Dendritic cell treated with granulocyte-macrophage colony-stimulating factor and Interleukin-4, amounts not matched to agents 40 ng/mL and 50 ng/mL, for 4 days (primary cell): ENCODE measurements at regions of chr3 and their contacts with region 1.

Region 1: DNA sequence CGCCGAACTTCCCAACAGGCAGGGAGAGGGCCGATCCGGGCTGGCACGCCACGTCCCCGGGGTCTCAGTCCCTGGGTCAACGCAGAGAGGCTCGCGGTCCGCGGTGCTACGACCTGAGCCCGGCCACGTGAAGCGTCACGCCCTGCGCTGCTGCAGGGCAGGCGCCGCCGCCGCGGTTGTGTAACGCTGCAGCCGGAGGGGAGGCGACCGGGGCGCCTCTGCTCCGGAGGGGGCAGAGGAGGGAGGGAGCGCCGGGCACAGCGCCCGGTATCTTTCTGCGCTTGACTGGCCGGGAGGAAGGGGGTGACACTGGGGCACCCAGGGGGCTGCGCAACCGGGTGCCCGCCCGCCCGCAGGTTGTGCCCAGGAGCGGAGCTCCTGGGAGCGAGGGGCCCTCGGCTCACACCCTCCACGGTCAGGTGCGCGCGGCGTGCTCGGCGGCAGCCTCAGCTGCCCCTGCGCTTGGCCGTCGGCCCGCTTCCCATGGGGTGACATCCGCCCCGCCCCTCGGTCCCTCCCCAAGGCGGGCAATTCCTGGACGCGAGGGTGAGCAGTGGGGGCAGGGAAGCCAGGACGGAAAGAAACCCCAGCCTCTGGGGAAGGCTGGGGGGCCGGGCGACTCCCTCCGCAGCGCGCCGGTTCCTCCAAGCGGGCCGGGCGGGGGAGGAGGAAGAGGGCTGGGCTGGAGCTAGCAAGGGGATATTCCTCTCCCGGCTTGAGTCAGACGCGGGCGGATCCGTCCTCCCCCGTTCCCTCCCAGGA is 852 bp upstream of the BHLHE40 start:
- H3K4me3 Mint-ChIP-seq: peak overlapping the region; percentile 98
- H3K27ac Mint-ChIP-seq: peak overlapping the region; percentile 99
- H3K4me1 Mint-ChIP-seq: peaks cover 40% of the 10 kb centered on the region
- H3K27me3 Mint-ChIP-seq: no peaks in the 10 kb centered on the region

Region 2: DNA sequence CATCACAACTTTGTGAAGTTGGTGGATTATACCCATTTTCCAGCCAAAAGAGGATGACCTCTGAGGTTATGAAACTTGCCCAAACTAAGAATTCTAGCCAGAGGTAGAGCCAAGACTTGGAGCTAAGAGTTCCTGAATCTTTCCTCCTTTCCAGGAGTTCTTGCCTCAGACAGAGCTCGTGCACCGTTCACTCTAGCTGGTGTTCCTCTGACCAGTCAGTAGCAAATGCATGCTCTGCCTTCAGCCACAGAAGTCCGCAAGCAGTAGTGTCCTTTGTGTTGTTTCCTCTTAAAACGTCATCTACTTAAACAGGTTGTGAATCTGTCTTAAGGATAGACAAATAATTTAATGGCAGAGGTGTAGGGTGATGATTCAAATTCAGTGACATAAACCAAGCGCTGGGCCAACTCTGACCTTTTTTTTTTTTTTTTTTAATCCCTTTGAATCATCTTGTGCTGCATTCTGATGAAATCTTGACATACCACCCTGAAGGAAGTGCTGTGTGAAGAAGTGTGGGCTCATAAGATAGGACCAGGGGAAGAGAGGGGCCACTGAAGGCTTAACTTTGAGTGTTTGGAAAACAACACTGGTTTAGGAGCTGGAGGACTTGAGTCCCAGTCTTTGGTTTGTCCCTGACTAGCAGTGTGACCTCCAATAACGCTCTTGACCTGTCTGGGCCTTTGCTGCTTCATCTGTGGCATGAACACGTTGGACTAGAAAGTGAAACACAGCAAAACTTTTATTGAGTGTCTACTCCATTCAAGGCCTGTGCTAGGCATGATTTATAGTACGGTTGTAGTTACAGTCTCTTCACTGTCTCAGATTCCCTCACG is 431.8 kb before region 1 on chr3:
- intact Hi-C with region 1: no loop called
- H3K4me3 Mint-ChIP-seq: no peak overlapping the region
- H3K27ac Mint-ChIP-seq: no peak overlapping the region
- H3K4me1 Mint-ChIP-seq: peaks cover 9% of the 10 kb centered on the region
- H3K27me3 Mint-ChIP-seq: no peaks in the 10 kb centered on the region

Region 3: DNA sequence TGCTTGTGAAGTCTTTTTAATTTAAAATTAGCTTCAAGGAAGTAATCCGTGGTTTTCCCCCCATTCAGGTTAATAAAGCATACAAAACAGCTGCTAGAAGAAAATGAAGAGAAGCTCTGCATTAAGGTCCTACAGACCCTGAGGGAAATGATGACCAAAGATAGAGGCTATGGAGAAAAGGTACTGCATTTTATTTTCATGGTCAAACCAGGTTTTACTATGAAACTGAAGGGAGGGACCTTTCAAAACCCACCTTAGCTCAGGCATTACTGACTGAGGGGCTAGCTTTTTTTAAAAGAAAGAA is 266.7 kb before region 1 on chr3:
- intact Hi-C with region 1: loop called (anchors 1 kb)
- H3K4me3 Mint-ChIP-seq: no peak overlapping the region
- H3K27ac Mint-ChIP-seq: no peak overlapping the region
- H3K4me1 Mint-ChIP-seq: peaks cover 9% of the 10 kb centered on the region
- H3K27me3 Mint-ChIP-seq: no peaks in the 10 kb centered on the region

Region 4: GRCh38 chr3:4741404-4742307 is 236.7 kb before region 1 on chr3:
- intact Hi-C with region 1: loop called (anchors 2 kb)
- H3K4me3 Mint-ChIP-seq: peak overlapping the region; percentile 57
- H3K27ac Mint-ChIP-seq: peak overlapping the region; percentile 95
- H3K4me1 Mint-ChIP-seq: peaks cover 85% of the 10 kb centered on the region
- H3K27me3 Mint-ChIP-seq: no peaks in the 10 kb centered on the region

Region 5: GRCh38 chr3:5006755-5007202 is 28.4 kb after region 1 on chr3:
- intact Hi-C with region 1: loop called (anchors 5 kb)
- H3K4me3 Mint-ChIP-seq: peak overlapping the region; percentile 11
- H3K27ac Mint-ChIP-seq: peak overlapping the region; percentile 92
- H3K4me1 Mint-ChIP-seq: peaks cover 57% of the 10 kb centered on the region
- H3K27me3 Mint-ChIP-seq: no peaks in the 10 kb centered on the region

Region 6: DNA sequence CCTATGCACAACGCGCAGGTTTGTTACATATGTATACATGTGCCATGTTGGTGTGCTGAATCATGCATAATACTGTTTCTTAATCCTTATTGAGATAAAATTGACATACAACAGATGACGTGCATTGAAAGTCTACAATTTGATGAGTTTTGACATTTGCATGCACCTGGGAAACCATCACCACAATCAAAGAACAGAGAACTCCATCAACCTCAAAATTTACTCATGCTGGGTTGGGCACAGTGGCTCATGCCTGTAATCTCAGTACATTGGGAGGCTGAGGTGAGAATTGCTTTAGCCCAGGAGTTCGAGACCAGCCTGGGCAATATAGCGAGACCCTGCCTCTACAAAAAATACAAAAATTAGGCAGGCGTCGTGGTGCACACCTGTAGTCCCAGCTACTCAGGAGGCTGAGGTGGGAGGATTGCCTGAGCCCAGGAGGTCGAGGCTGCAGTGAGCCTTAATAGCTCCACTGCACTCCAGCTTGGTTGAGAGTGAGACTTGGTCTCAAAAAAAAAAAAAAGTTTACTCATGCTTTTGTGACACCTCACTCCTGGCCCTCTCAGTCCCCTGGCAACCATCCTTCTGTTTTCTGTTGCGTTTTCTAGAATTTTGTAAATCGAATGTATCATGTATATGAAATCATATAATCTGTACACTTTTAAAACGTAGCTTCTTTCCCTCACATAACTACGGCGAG is 57.5 kb after region 1 on chr3:
- intact Hi-C with region 1: no loop called
- H3K4me3 Mint-ChIP-seq: no peak overlapping the region
- H3K27ac Mint-ChIP-seq: peak overlapping the region; percentile 28
- H3K4me1 Mint-ChIP-seq: peaks cover 54% of the 10 kb centered on the region
- H3K27me3 Mint-ChIP-seq: no peaks in the 10 kb centered on the region

Region 7: DNA sequence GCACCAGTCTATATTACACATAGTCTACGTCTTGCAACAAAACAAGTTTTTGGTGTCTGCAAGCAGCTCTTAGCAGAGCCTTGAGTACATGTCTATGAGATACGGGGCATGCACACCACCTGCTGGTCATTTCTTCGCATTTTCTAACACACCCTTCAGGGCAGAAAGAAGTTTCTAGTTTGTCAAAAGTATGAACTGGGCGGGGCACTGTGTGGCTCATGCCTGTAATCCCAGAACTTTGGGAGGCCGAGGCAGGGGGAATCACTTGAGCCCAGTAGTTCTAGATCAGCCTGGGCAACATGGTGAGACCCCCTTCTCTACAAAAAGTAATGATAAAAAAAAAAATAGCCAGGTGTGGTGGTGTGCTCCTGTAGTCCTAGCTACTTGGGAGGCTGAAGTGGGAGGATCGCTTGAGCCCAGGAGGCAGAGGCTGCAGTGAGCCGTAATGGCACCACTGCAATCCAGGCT is 79.5 kb after region 1 on chr3:
- intact Hi-C with region 1: loop called (anchors 2 kb)
- H3K4me3 Mint-ChIP-seq: no peak overlapping the region
- H3K27ac Mint-ChIP-seq: peak overlapping the region; percentile 26
- H3K4me1 Mint-ChIP-seq: peaks cover 54% of the 10 kb centered on the region
- H3K27me3 Mint-ChIP-seq: peaks cover 4% of the 10 kb centered on the region